ENCODE measurements at regions of chr5 and their contacts with region 1.

Region 1: DNA sequence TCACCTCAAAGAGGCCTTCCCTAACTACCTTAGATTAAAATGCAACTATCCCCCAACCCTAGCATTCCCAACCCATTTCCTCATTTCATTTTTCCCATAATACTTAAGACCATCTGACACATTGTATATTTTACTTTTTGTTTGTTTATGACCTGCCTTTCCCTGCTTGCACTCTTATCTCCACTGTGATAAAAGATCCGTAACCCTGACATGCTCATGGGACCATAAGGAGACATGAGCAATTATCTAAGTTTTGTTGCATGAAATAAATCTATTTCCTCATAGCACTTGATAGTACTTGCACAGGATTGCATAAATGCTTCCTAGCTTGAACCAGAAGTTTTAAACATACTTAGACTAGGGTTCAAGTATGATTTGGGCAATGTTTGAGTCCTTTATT is 323.7 kb downstream of the NPR3 start:
- DNase-seq: no peak

Region 2: GRCh38 chr5:33011803-33012202 is 23.0 kb before region 1 on chr5:
- intact Hi-C with region 1: loop called (anchors 1 kb)
- DNase-seq: no peak